OCI-LY7 (cell line): ENCODE measurements at regions of chr20 and their contacts with region 1.

Region 1: DNA sequence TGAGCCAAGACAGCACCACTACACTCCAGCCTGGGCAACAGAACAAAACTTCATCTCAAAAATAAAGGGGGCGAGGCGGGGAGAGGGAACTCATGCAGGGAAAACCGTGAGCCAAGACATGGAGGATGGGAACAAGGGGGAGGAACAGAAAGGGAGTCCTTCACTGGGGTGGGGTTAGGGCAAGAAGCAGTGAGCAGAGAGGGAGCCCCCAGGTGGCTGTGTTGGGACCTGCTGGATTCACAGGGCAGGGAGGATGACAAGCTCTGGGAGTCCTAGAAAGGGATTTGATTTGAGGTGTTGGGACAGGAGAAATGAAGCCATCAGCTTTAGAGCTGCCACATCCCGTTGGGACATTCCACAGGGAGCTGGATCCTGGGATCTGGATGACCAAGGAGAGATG is 90.6 kb upstream of the TOP1 start:
- DNase-seq: peak; percentile 45
- H3K4me3 ChIP-seq: no peak overlapping the region
- H3K27ac ChIP-seq: no peak overlapping the region
- H3K4me1 ChIP-seq: peaks cover 70% of the 10 kb centered on the region
- CTCF ChIP-seq: peak; percentile 76

Region 2: DNA sequence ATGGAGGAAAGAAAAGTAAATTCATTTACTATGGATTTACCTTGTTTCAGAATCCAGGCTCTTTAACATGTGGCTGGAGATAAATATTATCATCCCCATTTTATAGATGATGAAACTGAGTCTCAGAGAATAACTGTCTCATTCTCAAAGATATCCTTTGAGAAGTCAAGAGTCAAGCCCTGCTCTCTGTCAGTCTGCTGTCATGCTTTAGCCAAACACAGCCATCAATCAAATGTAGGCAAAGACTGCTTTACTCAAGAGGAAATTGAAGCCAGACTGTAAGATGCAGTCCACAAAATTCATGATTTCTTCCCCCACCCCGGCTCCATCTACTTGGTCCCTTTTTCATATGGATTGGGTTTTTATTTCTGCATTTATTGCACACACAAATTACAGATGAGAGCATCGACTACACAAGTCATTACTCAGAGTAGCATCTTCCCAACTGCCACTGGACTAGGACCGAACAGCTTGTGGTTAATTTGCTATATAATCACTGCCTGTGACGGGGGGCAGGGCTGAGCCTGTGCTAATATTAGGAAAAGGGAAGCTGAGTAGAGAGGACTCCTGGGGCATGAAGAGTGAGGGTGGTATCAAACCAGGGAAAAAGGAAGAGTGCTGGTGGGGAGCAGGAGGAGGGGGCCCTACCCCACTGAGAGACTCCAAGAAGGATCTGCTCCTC is 12.1 kb before region 1 on chr20:
- CTCF ChIA-PET with region 1: interaction called, 5 read pairs
- POLR2A ChIA-PET with region 1: interaction called, 65 read pairs
- intact Hi-C with region 1: loop called (anchors 1 kb)
- DNase-seq: peak; percentile 56
- H3K4me3 ChIP-seq: peak overlapping the region; percentile 33
- H3K27ac ChIP-seq: peak overlapping the region; percentile 96
- H3K4me1 ChIP-seq: peaks cover 70% of the 10 kb centered on the region
- CTCF ChIP-seq: no peak